Breast epithelium (tissue), 4 donors: ENCODE measurements at regions of chr3 and their contacts with region 1.

Region 1: DNA sequence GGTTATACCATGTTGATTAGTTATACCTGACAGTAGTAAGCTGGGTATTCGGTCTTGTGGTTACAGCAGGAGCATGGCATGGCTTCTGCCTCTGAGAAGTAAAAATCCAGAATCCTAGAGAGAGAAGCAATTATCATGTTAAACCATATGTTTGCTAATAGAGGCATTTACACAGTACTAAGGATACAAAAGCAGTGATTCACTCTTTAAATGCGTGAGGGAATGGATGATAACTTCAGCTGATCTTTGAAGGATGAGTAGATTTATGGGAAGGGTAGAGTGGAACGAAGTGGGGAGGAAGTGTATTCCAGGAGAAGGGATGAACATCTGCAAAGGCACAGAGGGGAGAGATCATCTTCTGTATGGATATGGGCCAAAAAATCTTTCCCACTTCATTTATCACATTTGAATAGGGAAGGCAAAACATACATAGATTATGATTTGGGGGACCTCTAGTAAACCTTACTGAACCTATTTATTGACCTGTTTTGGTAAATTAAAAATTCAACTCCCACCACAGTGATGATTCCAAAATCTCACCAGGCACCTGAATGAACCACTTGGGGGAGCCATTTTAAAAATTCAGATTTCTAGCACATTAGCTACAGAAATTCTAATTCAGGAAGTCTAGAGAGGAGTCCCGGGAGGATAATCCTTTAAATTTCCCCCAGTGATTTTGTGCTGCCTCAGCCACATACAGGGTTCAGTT is 35.1 kb downstream of the IGSF10 start:
- DNase-seq: no peak
- H3K4me3 ChIP-seq: no peak overlapping the region
- H3K27ac ChIP-seq: no peak overlapping the region
- H3K4me1 ChIP-seq: no peaks in the 10 kb centered on the region
- H3K27me3 ChIP-seq: no peaks in the 10 kb centered on the region
- CTCF ChIP-seq: no peak
- POLR2A ChIP-seq: no peak

Region 2: DNA sequence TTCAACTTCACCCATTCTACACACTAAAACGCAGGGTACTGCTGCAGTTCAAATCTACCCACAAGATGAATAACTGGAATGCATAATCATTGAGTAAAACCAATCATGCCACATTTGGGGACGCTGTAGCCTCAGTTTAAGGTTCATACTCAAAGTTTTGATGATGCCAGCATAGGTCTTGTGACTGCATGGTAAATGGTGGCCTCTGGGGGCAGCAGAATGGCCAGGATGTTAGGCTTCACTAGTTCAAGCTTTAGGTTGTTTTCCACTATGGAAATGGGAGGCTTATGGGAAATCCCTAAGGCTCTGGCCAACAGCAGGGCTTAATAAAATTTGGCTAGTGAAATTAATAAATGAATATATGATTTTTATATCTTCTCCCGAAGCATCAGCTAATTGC is 1122.0 kb before region 1 on chr3:
- intact Hi-C with region 1: loop called (anchors 10 kb)
- DNase-seq: no peak
- H3K4me3 ChIP-seq: no peak overlapping the region
- H3K27ac ChIP-seq: no peak overlapping the region
- H3K4me1 ChIP-seq: no peaks in the 10 kb centered on the region
- H3K27me3 ChIP-seq: no peaks in the 10 kb centered on the region
- CTCF ChIP-seq: peak in 1 of 3 donors; percentile 16
- POLR2A ChIP-seq: no peak

Region 3: GRCh38 chr3:150610790-150611189 is 815.0 kb before region 1 on chr3:
- intact Hi-C with region 1: loop called (anchors 5 kb)
- DNase-seq: no peak
- H3K4me3 ChIP-seq: no peak overlapping the region
- H3K27ac ChIP-seq: no peak overlapping the region
- H3K4me1 ChIP-seq: peaks cover 0 to 7% of the 10 kb centered on the region in 2 donors
- H3K27me3 ChIP-seq: no peaks in the 10 kb centered on the region
- CTCF ChIP-seq: no peak
- POLR2A ChIP-seq: no peak

Region 4: DNA sequence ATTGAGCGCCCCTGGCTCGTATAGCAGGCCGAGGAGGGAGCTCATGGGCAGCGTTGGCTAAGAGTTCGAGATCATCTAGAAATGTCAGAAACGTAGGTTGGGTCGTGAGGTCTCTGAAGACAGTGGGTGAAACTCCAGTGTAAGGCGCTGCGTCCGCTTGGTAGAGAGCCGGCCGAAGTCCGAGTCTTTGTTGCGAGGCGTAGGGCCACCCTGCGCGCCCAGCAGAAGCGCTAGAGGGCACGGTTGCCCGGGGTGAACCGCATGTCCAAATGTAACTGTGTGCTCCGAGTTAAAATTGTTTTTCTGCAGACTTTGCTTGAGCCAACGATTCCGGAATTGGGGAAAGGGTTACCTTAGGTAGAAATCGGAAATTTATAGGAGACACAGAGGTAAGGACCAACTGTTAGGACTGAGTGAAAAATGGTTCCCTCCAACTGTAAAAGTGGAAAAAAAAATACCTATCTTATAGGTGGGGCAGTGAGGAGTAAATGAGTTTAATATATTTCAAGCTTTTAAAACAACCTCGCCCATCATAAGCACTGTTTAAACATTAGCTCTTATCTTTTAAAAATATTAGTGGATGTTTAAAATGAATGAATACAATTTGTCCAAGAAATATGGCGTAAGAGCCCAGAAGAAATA is 661.8 kb before region 1 on chr3:
- intact Hi-C with region 1: no loop called
- DNase-seq: peak; percentile 33 to 65
- H3K4me3 ChIP-seq: peak overlapping the region; percentile 81 to 87 (median 83)
- H3K27ac ChIP-seq: peak overlapping the region; percentile 96
- H3K4me1 ChIP-seq: peaks cover 0 to 4% of the 10 kb centered on the region in 2 donors
- H3K27me3 ChIP-seq: no peaks in the 10 kb centered on the region
- CTCF ChIP-seq: peak in 1 of 3 donors; percentile 14
- POLR2A ChIP-seq: no peak

Region 5: GRCh38 chr3:151412989-151413388 is 12.8 kb before region 1 on chr3:
- intact Hi-C with region 1: no loop called
- DNase-seq: no peak
- H3K4me3 ChIP-seq: no peak overlapping the region
- H3K27ac ChIP-seq: no peak overlapping the region
- H3K4me1 ChIP-seq: no peaks in the 10 kb centered on the region
- H3K27me3 ChIP-seq: no peaks in the 10 kb centered on the region
- CTCF ChIP-seq: no peak
- POLR2A ChIP-seq: no peak